ENCODE measurements at regions of chr22 and their contacts with region 1.

Region 1: DNA sequence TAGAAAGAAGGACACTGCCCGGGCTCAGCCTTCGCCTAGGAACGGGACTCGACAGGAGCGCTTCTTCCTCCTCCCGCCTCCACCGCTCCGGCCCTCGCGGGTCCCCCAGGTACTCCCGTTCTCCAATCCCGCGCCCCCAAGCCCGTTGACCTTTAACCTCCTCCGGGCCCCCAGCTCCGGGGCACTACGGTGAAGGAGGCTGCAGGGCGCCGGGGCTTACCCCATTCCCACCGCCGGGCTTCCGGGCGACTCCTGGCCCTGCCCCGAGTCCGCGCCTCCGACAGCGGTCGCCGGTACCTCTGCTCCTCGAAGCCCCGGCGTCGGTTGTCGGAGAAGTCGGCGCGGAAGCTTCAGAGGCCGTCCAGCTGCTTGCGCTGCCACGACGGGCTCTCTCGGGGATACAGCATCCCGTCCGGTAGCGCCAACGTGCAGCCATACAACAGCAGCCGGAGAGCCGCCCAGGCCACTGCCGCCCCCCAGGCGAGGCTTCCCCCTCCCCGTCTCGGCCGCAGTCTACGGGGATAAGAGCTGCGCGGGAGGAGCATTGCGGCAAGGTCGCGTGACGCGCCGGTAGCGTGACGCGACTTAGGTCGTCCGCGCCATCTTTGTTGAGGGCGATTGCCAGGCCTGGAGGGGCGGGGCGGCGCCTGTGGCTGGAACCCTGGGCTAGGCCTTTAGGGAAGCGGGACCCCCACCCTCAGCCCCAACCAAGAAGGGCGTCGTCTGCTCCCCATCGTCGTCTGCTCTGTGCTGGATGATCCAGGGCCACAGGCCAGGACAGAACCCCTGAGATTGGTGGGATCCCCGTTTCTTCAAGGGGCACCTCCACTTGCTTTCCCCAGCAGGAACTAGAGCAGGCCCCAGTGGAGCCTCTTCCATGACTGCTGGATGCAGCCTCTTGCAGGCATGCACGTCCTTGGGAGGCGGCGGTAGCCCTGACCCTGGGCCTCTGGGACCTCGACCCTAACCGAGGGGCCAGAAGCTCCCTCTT is 26.3 kb downstream of the RGL4 start:
- DNase-seq: peak; percentile 72 to 85 (median 81)
- ATAC-seq: peak; percentile 97
- H3K4me3 ChIP-seq: peak overlapping the region; percentile 71
- H3K4me3 Mint-ChIP-seq: peak overlapping the region; percentile 78 to 88 (median 81)
- H3K27ac ChIP-seq: peak overlapping the region; percentile 89
- H3K27ac Mint-ChIP-seq: peak overlapping the region; percentile 8 to 93 (median 86)
- H3K4me1 ChIP-seq: peaks cover 10 to 12% of the 10 kb centered on the region in 2 donors
- H3K4me1 Mint-ChIP-seq: peaks cover 12 to 24% (median 16%) of the 10 kb centered on the region in 7 donors
- H3K27me3 ChIP-seq: no peaks in the 10 kb centered on the region
- H3K27me3 Mint-ChIP-seq: no peaks in the 10 kb centered on the region

Region 2: DNA sequence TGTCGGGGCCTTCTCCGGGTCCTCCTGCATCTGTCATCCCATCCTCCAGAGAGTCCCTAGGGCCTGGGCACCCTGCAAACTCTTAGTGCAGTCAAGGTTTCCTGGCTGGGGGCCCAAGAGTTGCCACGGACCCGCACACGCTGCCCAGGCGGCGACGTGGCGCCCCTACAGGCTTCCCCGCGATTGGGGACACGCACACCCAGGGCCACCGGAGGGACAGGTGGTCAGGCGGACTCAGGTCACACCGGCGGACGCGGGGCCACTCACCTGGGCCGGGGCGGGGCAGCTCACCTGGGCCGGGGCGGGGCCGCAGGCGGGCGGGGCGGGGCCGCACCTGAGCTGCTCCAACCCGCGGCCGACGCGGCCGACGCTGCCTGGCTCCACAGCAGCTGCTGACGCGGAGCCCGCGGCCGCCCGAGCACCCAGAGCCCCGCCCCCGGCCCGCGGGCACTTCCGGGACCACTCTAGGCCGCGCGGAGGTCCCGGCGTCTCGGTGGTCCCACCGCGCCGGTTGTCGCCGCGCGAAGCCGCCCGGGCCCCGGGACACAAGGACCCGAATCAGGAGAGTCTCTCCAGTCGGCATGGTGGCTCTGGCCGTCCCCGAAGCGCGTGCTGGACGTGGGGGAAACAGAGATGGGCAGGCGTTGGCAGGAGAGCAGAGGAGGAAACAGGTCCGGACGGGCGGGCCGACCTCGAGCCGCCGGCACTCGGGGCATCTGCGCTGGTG is 33.8 kb after region 1 on chr22 and contains the start of gene ZNF70:
- CTCF ChIA-PET with region 1: interaction called, 3 read pairs
- POLR2A ChIA-PET with region 1: interaction called, 9 read pairs
- intact Hi-C with region 1: loop called (anchors 1 to 5 kb)
- DNase-seq: peak; percentile 78 to 88 (median 86)
- ATAC-seq: peak; percentile 99
- H3K4me3 ChIP-seq: peak within 1 kb of the TSS; percentile 79
- H3K4me3 Mint-ChIP-seq: peak within 1 kb of the TSS; percentile 63 to 88 (median 82)
- H3K27ac ChIP-seq: peak within 1 kb of the TSS; percentile 73
- H3K27ac Mint-ChIP-seq: peak within 1 kb of the TSS; percentile 37 to 91 (median 76)
- H3K4me1 ChIP-seq: peaks cover 0 to 9% of the 10 kb centered on the region in 2 donors
- H3K4me1 Mint-ChIP-seq: peaks cover 11 to 18% (median 13%) of the 10 kb centered on the region in 7 donors
- H3K27me3 ChIP-seq: no peaks in the 10 kb centered on the region
- H3K27me3 Mint-ChIP-seq: no peaks in the 10 kb centered on the region
- total RNA-seq, gene ZNF70: 3.1 to 7.9 (median 4.0) TPM

Region 3: DNA sequence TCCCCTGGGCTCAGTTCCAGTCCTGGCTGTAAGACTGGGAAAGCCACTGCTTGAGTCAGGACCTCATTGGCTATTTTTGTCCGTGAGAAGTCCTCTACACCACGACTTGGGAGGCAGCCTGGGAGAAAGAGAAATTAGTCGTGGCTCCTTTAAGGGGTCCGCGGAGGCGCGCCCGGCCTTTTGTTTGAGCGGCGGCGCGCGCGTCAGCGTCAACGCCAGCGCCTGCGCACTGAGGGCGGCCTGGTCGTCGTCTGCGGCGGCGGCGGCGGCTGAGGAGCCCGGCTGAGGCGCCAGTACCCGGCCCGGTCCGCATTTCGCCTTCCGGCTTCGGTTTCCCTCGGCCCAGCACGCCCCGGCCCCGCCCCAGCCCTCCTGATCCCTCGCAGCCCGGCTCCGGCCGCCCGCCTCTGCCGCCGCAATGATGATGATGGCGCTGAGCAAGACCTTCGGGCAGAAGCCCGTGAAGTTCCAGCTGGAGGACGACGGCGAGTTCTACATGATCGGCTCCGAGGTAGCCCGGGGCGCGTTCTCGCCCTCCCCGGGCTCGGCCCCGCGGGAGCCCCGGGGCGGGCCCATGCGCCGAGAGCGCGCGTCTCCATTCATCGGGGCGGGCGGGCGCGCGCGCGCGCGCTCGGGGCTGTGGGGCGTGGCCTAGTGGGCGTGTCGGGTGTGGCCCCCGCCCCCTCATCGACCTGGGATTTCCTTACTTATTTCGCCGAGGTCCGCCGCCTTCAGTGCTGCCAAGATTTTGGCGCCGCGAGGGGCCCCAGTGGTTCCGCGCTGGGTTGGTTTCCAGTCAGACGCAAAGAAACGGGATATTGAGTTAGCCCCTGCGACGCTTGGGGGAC is 69.9 kb after region 1 on chr22 and contains the start of gene SMARCB1:
- CTCF ChIA-PET with region 1: no interaction called
- POLR2A ChIA-PET with region 1: interaction called, 10 read pairs
- intact Hi-C with region 1: loop called (anchors 1 kb)
- DNase-seq: peak; percentile 80 to 90 (median 87)
- ATAC-seq: peak; percentile 94
- H3K4me3 ChIP-seq: peak within 1 kb of the TSS; percentile 85
- H3K4me3 Mint-ChIP-seq: peak within 1 kb of the TSS; percentile 81 to 94 (median 91)
- H3K27ac ChIP-seq: peak within 1 kb of the TSS; percentile 99
- H3K27ac Mint-ChIP-seq: peak within 1 kb of the TSS; percentile 89 to 98 (median 96)
- H3K4me1 ChIP-seq: peaks cover 11 to 17% of the 10 kb centered on the region in 2 donors
- H3K4me1 Mint-ChIP-seq: peaks cover 13 to 54% (median 41%) of the 10 kb centered on the region in 7 donors
- H3K27me3 ChIP-seq: no peaks in the 10 kb centered on the region
- H3K27me3 Mint-ChIP-seq: no peaks in the 10 kb centered on the region
- total RNA-seq, gene SMARCB1: 47.1 to 81.1 (median 54.2) TPM

Region 4: DNA sequence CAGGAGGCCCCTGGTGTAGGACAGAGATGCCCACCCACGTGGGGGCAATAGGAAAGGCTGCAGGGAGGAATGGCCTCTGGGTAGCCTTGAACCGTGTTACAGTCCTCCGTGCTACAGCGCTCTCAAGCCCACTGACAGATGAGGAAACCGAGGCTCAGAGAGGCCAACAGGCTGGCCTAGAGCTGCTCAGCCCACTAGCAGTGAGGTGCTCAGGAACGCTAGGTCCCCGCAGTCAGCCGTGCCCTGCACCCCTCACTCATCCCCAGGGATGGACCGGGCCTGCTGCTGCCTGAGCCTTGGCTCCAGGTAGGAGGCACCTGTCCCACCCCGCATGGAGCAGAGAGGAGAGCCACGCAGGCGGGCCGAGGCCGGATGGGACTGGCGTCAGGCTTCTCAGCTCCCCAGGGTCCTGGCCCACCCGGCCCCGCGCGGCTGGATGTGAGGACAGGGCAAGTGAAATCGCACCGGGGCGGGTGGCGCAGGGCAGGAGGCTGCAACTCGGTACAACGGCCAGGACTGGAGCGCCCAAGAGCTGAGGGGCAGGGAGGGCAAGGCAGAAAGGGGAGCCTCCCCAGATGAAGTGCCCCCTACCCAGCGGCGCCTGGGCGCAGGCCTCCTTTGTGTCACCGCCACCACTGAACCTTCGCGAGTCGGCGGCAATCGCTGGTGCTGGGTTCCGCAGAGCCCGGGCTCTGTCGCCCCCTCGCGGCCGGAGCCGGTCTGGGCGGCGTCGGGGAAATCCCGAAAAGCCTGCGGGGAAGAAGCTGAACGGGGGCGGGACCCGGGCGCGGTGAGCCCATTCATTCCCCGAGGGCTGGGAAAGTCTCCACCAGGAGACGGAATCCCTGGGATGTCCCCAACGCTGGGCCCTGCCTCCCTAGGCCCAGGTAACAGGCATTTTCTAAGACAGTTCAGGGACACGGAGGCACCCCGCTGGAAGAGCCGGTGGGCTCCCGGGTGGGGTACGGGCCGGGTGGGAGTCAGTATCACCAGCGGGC is 132.2 kb after region 1 on chr22:
- CTCF ChIA-PET with region 1: interaction called, 3 read pairs
- POLR2A ChIA-PET with region 1: no interaction called
- intact Hi-C with region 1: loop called in 1 of 2 experiments (anchors 5 kb)
- DNase-seq: peak; percentile 70 to 96 (median 84)
- ATAC-seq: peak; percentile 98
- H3K4me3 ChIP-seq: no peak overlapping the region
- H3K4me3 Mint-ChIP-seq: peak overlapping the region in 3 of 10 donors; percentile 12 to 49 (median 23)
- H3K27ac ChIP-seq: no peak overlapping the region
- H3K27ac Mint-ChIP-seq: no peak overlapping the region
- H3K4me1 ChIP-seq: no peaks in the 10 kb centered on the region
- H3K4me1 Mint-ChIP-seq: peaks cover 0 to 4% (median 0%) of the 10 kb centered on the region in 7 donors
- H3K27me3 ChIP-seq: no peaks in the 10 kb centered on the region
- H3K27me3 Mint-ChIP-seq: peaks cover 0 to 13% (median 0%) of the 10 kb centered on the region in 5 donors

Region 5: GRCh38 chr22:23868580-23868979 is 151.5 kb after region 1 on chr22:
- CTCF ChIA-PET with region 1: no interaction called
- POLR2A ChIA-PET with region 1: no interaction called
- intact Hi-C with region 1: no loop called
- DNase-seq: no peak
- ATAC-seq: no peak
- H3K4me3 ChIP-seq: no peak overlapping the region
- H3K4me3 Mint-ChIP-seq: no peak overlapping the region
- H3K27ac ChIP-seq: no peak overlapping the region
- H3K27ac Mint-ChIP-seq: no peak overlapping the region
- H3K4me1 ChIP-seq: no peaks in the 10 kb centered on the region
- H3K4me1 Mint-ChIP-seq: peaks cover 0 to 5% (median 0%) of the 10 kb centered on the region in 7 donors
- H3K27me3 ChIP-seq: no peaks in the 10 kb centered on the region
- H3K27me3 Mint-ChIP-seq: no peaks in the 10 kb centered on the region

Region 6: GRCh38 chr22:23893943-23894709 is 177.0 kb after region 1 on chr22 and contains the start of gene MIF:
- CTCF ChIA-PET with region 1: no interaction called
- POLR2A ChIA-PET with region 1: no interaction called
- intact Hi-C with region 1: loop called in 1 of 2 experiments (anchors 1 kb)
- DNase-seq: peak; percentile 88 to 100 (median 94)
- ATAC-seq: peak; percentile 96
- H3K4me3 ChIP-seq: peak within 1 kb of the TSS; percentile 88
- H3K4me3 Mint-ChIP-seq: peak within 1 kb of the TSS; percentile 88 to 97 (median 94)
- H3K27ac ChIP-seq: peak within 1 kb of the TSS; percentile 93
- H3K27ac Mint-ChIP-seq: peak within 1 kb of the TSS; percentile 92 to 100 (median 97)
- H3K4me1 ChIP-seq: peaks cover 16% of the 10 kb centered on the region in 2 donors
- H3K4me1 Mint-ChIP-seq: peaks cover 12 to 39% (median 30%) of the 10 kb centered on the region in 7 donors
- H3K27me3 ChIP-seq: no peaks in the 10 kb centered on the region
- H3K27me3 Mint-ChIP-seq: no peaks in the 10 kb centered on the region
- total RNA-seq, gene MIF: 179 to 1,010 (median 197) TPM